Left colon (tissue), 2 donors: ENCODE measurements at regions of chr5 and their contacts with region 1.

Region 1: GRCh38 chr5:58886315-58887207 is 303.7 kb downstream of the RAB3C start:
- DNase-seq: peak in 1 of 2 donors; percentile 47
- ATAC-seq: peak; percentile 84

Region 2: DNA sequence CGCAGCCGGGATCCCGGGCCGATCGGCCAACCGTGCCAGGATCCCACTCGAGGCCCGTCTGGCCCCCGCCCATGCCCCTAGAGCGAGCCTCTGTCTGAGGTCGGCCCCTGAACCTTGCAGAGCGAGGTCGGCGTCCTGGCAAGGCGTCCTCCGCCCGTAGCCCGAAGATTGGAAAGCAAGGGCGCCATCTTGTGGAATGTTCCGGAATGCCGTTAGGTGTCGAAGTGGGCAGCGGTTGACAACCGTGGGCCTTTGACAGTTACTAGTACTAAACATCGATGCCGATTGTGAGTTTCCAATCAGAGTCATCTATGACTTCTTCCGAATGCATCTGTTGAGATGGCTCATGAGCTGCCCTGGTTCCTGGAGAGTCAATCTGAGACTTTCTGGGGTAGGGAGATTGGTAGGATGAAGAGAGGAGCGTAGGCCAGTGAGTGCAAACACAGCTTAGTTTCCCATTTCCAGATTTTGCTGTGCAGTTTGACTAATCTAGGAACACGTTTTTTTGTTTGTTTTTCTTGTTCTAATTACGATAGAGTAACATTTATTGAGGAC is 425.8 kb before region 1 on chr5:
- intact Hi-C with region 1: no loop called
- DNase-seq: peak; percentile 89 to 97
- ATAC-seq: peak; percentile 72

Region 3: DNA sequence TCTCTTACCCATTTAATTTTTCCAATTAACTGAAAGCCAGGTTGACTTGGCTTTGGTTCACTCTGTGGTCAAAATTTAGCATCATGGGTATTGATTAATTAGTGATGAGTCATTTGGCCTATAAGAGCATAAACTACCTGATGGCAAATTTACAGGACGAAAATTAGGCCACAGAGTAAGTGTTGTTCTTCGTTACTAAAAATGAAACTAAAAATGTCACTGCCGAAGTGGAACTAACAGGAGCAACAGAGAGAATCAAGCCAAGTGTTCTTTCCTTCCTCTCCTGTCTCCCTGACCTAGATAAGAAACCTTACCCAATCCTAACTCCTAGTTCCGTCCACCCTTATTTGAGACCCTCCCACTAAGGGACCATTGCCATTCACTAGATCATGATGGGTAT is 126.8 kb before region 1 on chr5:
- intact Hi-C with region 1: no loop called
- DNase-seq: no peak
- ATAC-seq: peak; percentile 35

Region 4: GRCh38 chr5:58950224-58950623 is 63.7 kb after region 1 on chr5:
- intact Hi-C with region 1: no loop called
- DNase-seq: no peak
- ATAC-seq: no peak

Region 5: GRCh38 chr5:58999804-59000595 is 113.4 kb after region 1 on chr5:
- intact Hi-C with region 1: loop called in 1 of 2 experiments (anchors 5 kb)
- DNase-seq: no peak
- ATAC-seq: no peak

Region 6: GRCh38 chr5:59174248-59174844 is 287.8 kb after region 1 on chr5:
- intact Hi-C with region 1: loop called (anchors 5 to 10 kb)
- DNase-seq: no peak
- ATAC-seq: peak; percentile 82

Region 7: DNA sequence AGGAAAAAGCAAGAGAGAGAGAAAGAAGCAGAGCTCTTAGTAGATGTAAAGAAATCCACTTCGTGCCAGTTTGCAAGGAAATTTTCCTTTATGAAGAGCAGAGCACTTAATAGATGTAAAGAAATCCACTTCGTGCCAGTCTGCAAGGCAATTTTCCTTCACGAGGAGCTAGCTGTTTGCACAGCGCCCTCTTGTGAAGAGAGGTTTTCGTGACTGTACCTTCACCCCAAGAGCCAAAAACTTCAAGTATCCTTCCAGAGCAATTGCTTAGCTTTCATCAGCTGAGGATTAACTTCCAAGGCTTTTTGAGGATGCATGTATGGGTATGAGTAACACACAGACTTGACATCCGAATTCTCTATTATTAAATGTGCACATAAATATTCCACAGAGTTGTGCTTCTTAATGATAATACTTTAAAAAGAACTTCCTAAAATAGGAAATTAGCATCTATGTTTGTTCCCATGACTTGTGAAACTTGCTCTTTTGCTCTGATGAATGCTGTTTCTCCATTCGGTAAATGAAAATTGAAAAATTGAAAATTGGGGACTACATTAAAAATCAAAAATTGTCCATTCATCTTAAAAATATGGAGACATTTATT is 481.3 kb after region 1 on chr5:
- intact Hi-C with region 1: loop called in 1 of 2 experiments (anchors 10 kb)
- DNase-seq: peak; percentile 49 to 71
- ATAC-seq: peak; percentile 62

Region 8: DNA sequence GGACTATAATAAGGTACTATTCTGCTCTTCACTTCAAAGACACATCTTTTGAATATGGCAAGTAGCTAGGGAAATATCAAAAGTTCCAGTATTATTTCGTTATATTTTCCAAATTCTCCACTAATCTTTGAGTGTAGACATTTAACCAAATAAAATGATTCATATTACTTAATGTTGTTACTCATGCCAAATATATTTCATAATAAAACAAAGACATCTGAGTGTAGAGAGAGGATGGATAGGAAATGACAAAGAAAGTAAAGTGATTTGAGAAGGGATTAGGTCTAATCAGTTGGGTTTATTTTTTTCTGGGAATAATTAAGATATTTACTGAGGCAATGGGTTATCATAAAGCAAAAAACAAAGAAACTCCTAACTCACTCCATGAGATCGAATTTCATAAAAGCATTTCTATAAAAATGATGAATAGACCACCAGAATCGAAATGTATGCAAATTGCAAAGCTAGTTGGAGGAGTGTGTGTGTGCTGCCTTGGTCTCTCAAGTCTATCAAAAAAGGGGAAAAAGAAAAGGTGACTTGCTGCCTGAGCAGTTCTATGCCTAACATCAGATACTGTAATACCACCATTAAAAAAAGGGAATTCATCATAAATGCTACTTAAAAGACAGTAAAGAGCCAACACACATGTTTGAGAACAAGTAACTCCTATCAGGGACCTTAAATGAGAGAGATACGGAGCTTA is 751.5 kb after region 1 on chr5:
- intact Hi-C with region 1: no loop called
- DNase-seq: no peak
- ATAC-seq: no peak

Region 9: DNA sequence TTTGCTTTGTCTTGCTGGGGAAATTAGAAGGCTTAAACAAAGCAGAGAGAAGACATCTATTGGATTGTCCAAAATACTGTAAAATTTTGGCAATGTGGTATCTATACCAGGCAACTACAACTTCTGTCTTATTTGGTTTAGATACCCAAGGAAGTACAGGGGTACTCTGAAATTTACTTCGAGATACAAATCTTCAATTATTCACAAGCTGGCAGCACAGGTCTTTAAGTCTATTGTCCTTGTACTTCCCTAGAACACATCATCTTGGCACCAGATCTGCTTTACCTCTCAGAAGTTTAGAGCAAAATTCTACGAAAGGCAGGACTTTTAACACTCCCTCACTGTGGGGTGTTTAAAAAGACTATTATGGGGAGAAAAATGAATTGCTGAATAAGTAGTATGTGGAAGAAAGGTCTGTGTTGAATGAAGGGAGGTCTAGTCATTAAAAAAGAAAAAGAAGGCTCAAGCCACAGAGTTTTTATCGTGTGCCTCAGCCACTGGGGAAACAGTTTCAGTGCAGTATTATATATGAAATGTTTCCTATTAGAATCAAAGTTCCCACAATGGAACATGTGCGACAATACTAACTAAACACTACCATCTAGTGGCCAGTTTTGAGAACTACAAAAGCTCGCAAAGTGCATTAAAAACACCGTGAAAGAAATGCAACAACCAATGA is 913.2 kb after region 1 on chr5:
- intact Hi-C with region 1: loop called in 1 of 2 experiments (anchors 5 kb)
- DNase-seq: no peak
- ATAC-seq: peak; percentile 81